Psoas muscle (tissue), 8 donors: ENCODE measurements at regions of chr14 and their contacts with region 1.

Region 1: GRCh38 chr14:105086833-105087307 is 21.6 kb upstream of the GPR132 start:
- DNase-seq: peak; percentile 80 to 83
- ATAC-seq: peak; percentile 57 to 68 (median 60)
- H3K4me3 ChIP-seq: peak overlapping the region; percentile 57
- H3K27ac ChIP-seq: no peak overlapping the region
- H3K4me1 ChIP-seq: no peaks in the 10 kb centered on the region
- H3K27me3 ChIP-seq: peaks cover 0 to 35% (median 9%) of the 10 kb centered on the region in 3 donors
- CTCF ChIP-seq: peak; percentile 70

Region 2: DNA sequence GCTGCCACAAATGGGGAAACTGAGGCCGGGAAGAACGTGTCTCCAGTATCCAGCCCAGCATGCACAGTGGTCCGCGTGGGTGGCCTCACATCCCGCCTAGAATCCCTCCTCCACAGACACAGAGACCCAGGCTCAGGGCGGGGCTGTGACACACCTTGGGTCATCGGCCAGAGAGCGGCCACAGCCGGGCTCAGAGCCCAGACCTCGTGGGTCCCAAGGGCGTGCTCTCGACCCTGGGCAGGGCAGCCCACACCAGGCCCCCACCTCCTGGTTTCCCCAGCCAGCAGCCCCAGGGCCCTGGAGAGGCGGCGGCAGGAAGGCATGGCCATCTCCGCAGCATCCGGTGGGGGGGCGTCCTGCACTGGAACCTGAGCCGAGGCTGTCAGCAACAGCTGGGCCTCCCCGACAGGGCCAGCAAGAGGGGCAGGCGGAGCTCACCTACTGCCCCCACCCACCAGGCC is 66.4 kb after region 1 on chr14:
- intact Hi-C with region 1: loop called in 1 of 2 experiments (anchors 5 kb)
- DNase-seq: peak; percentile 65 to 81
- ATAC-seq: peak; percentile 38 to 65 (median 60)
- H3K4me3 ChIP-seq: no peak overlapping the region
- H3K27ac ChIP-seq: peak overlapping the region; percentile 96
- H3K4me1 ChIP-seq: peaks cover 20% of the 10 kb centered on the region
- H3K27me3 ChIP-seq: no peaks in the 10 kb centered on the region
- CTCF ChIP-seq: no peak

Region 3: GRCh38 chr14:105197271-105197670 is 110.4 kb after region 1 on chr14:
- intact Hi-C with region 1: loop called (anchors 5 kb)
- DNase-seq: peak in 1 of 2 donors; percentile 78
- ATAC-seq: peak in 3 of 4 donors; percentile 2 to 28 (median 20)
- H3K4me3 ChIP-seq: no peak overlapping the region
- H3K27ac ChIP-seq: peak overlapping the region; percentile 61
- H3K4me1 ChIP-seq: peaks cover 13% of the 10 kb centered on the region
- H3K27me3 ChIP-seq: peaks cover 0 to 48% (median 15%) of the 10 kb centered on the region in 3 donors
- CTCF ChIP-seq: no peak

Region 4: GRCh38 chr14:105267820-105268548 is 181.1 kb after region 1 on chr14:
- intact Hi-C with region 1: loop called in 1 of 2 experiments (anchors 5 kb)
- DNase-seq: no peak
- ATAC-seq: peak; percentile 83 to 91 (median 90)
- H3K4me3 ChIP-seq: no peak overlapping the region
- H3K27ac ChIP-seq: no peak overlapping the region
- H3K4me1 ChIP-seq: peaks cover 5% of the 10 kb centered on the region
- H3K27me3 ChIP-seq: no peaks in the 10 kb centered on the region
- CTCF ChIP-seq: peak; percentile 19

Region 5: DNA sequence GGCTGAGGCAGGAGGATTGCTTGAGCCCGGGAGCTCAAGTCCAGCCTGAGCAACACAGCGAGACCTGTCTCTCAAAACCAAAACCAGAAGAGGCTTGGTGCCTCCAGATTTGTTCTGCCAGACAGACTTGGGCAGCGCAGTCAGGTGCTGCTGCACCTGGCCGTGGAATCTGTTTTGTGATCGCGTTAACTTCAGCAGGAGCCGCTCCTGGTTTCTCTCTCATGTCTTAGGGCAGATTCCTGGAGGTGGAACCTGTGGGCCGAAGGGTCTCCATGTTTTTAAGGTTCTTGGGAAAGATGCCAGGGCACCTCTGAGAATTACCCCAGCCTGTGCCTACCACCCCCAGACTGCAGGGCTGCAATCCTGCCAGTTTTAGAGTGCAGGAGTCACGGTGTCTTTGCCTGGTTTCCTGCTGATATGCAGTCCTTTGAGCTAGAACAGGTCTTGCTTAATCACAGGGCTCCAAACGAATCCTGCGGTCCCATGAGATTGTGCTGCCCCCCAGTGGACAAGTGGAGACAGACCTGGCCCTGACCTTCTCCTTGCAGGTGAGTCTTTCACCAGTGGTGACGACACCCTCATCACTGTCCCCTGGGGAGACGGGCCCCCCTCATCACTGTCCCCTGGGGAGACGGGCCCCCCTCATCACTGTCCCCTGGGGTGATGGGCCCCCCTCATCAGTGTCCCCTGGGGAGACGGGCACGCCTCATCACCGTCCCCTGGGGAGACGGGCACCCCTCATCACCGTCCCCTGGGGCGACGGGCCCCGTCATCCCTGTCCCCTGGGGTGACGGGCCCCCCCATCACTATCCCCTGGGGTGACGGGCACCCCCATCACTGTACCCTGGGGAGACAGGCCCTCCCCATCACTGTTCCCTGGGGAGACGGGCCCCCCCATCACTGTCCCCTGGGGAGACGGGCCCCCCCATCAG is 265.3 kb after region 1 on chr14:
- intact Hi-C with region 1: loop called (anchors 1 to 5 kb)
- DNase-seq: peak; percentile 83 to 92
- ATAC-seq: peak; percentile 93 to 98 (median 96)
- H3K4me3 ChIP-seq: no peak overlapping the region
- H3K27ac ChIP-seq: peak overlapping the region; percentile 38
- H3K4me1 ChIP-seq: peaks cover 8% of the 10 kb centered on the region
- H3K27me3 ChIP-seq: no peaks in the 10 kb centered on the region
- CTCF ChIP-seq: peak; percentile 87